GM23248 (cell line): ENCODE measurements at regions of chr3 and their contacts with region 1.

Region 1: DNA sequence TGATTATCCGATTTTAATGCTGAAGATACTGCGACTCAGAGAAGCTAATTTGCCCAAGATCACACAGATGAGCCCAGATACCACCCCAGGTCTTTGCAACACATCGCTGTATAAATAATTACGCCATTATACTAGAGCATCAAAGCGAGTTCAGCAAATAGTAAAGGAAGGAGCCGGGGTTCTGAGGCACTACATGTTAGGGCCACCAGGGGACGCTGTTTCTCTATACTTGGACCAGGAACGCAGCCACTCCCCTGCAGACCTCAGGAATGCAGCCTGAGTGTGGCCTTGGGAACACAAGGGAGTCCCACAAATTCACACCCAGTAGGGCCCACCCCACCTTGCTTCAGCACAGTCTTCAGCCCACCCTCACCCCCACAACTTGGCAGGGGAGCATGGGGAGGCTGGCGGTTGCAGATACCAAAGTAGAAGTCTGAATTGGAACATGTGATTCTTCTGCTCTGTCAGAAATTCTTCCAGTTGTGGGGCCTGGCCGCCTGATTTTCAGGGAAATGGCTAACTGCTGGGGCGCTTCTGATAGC is 57.8 kb upstream of the RYK start:
- DNase-seq: peak; percentile 85
- H3K4me3 ChIP-seq: peak overlapping the region; percentile 66
- H3K27ac ChIP-seq: peak overlapping the region; percentile 67
- H3K4me1 ChIP-seq: peaks cover 35% of the 10 kb centered on the region
- H3K27me3 ChIP-seq: no peaks in the 10 kb centered on the region

Region 2: GRCh38 chr3:134212906-134213665 is 95.3 kb before region 1 on chr3:
- in situ Hi-C with region 1: loop called (anchors 5 kb)
- DNase-seq: peak; percentile 72
- H3K4me3 ChIP-seq: no peak overlapping the region
- H3K27ac ChIP-seq: no peak overlapping the region
- H3K4me1 ChIP-seq: no peaks in the 10 kb centered on the region
- H3K27me3 ChIP-seq: no peaks in the 10 kb centered on the region

Region 3: GRCh38 chr3:134650431-134651346 is 342.3 kb after region 1 on chr3 and contains the start of gene KY:
- in situ Hi-C with region 1: no loop called
- DNase-seq: peak; percentile 79
- H3K4me3 ChIP-seq: peak within 1 kb of the TSS; percentile 67
- H3K27ac ChIP-seq: peak within 1 kb of the TSS; percentile 40
- H3K4me1 ChIP-seq: peaks cover 11% of the 10 kb centered on the region
- H3K27me3 ChIP-seq: no peaks in the 10 kb centered on the region
- total RNA-seq, gene KY: 0.51 and 0.76 TPM in 2 replicates